Activated CD4-positive, alpha-beta memory T cell treated with anti-CD3 and anti-CD28 coated beads for 36 hours (primary cell): ENCODE measurements at regions of chr3 and their contacts with region 1.

Region 1: GRCh38 chr3:139935016-139935865 is at the start of gene CLSTN2:
- DNase-seq: peak; percentile 41
- H3K4me3 Mint-ChIP-seq: no peak within 1 kb of the TSS
- H3K27ac Mint-ChIP-seq: no peak within 1 kb of the TSS
- H3K4me1 Mint-ChIP-seq: peaks cover 6% of the 10 kb centered on the region
- H3K27me3 Mint-ChIP-seq: peaks cover 37% of the 10 kb centered on the region
- total RNA-seq, gene CLSTN2: not detected

Region 2: DNA sequence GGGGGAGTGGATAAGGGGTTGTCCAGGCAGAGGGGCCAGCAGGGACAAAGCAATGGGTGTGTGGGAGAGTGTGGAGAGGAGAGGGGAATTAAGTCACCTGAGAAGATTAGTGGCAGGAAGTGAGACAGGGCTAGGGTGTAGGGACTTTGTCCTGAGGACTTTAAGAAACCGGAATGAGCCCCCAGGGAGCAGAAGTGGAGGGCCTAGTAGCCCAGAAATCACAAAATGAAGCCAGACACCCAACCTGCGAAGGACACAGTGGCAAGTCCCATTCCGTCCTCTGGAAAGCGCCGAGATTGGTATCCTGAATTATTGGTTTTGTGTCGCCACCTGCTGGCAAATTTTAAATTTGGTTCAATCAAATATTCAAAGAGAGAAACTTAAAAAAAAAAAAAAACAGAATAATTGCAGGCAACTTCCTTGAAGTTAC is 928.4 kb after region 1 on chr3:
- CTCF ChIA-PET with region 1: no interaction called
- POLR2A ChIA-PET with region 1: no interaction called
- intact Hi-C with region 1: loop called (anchors 5 kb)
- DNase-seq: peak; percentile 38
- H3K4me3 Mint-ChIP-seq: no peak overlapping the region
- H3K27ac Mint-ChIP-seq: no peak overlapping the region
- H3K4me1 Mint-ChIP-seq: no peaks in the 10 kb centered on the region
- H3K27me3 Mint-ChIP-seq: peaks cover 6% of the 10 kb centered on the region